ENCODE measurements at regions of chr12 and their contacts with region 1.

Region 1: DNA sequence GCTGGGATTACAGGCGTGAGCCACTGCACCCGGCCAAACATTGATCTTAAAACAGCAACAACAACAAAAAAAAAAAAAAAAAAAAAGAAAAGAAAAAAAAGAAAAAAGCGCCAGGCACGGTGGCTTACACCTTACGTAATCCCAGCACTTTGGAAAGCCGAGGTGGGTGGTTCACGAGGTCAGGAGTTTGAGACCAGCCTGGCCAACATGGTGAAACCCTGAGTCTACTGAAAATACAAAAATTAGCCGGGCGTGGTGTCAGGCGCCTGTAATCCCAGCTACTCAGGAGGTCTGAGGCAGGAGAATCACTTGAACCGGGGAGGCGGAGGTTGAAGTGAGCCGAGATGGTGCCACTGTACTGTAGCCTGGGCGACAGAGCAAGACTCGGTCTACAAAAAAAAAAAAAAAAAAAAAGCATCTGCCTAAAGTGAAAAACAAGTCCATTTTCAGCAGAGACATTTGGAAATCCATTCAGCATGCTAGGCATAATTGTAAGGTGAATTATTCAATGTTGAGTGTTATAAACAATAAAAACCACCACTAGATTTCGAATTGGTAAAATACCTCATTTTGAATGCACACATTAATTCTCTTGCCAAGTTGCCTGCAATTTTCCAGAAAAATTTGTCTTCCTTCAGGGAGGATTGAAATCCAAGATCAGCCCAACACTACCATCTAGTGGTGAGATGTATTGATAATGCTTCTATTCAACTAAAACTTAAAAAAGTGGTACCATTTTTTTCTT is 8.0 kb upstream of the CERS5 start:
- DNase-seq: peak; percentile 52 to 81
- ATAC-seq: peak in 1 of 2 experiments; percentile 72; a peak in 3 of 6 replicates
- H3K4me3 ChIP-seq: no peak overlapping the region
- H3K27ac ChIP-seq: no peak overlapping the region
- H3K4me1 ChIP-seq: 0 out of 3 replicates have a peak, but pooled peaks cover 4% of the 10 kb centered on the region
- CTCF ChIP-seq: peak; percentile 91
- EP300 ChIP-seq: no peak
- POLR2A ChIP-seq: no peak
- RAD21 ChIP-seq: peak; percentile 91 to 92

Region 2: GRCh38 chr12:49750027-49750995 is 424.8 kb before region 1 on chr12:
- CTCF ChIA-PET with region 1: no interaction called
- POLR2A ChIA-PET with region 1: no interaction called
- DNase-seq: peak in 1 of 2 experiments; percentile 49
- ATAC-seq: peak; percentile 71 to 91
- H3K4me3 ChIP-seq: no peak overlapping the region
- H3K27ac ChIP-seq: peak overlapping the region; percentile 63 to 78
- H3K4me1 ChIP-seq: peaks cover 21% of the 10 kb centered on the region
- CTCF ChIP-seq: no peak
- EP300 ChIP-seq: no peak
- POLR2A ChIP-seq: no peak
- RAD21 ChIP-seq: no peak

Region 3: GRCh38 chr12:50103767-50104321 is 71.3 kb before region 1 on chr12 and contains the start of gene GPD1:
- CTCF ChIA-PET with region 1: interaction called, 23 read pairs
- POLR2A ChIA-PET with region 1: interaction called, 3 read pairs
- DNase-seq: no peak
- ATAC-seq: peak; percentile 5 to 60; a peak in 3 of 6 replicates
- H3K4me3 ChIP-seq: no peak within 1 kb of the TSS
- H3K27ac ChIP-seq: no peak within 1 kb of the TSS
- H3K4me1 ChIP-seq: no peaks in the 10 kb centered on the region
- CTCF ChIP-seq: no peak
- EP300 ChIP-seq: no peak
- POLR2A ChIP-seq: no peak
- RAD21 ChIP-seq: no peak
- polyA plus RNA-seq, gene GPD1: 0.44 and 0.52 TPM in 2 replicates

Region 4: GRCh38 chr12:50187084-50187900 is 12.1 kb after region 1 on chr12:
- CTCF ChIA-PET with region 1: interaction called, 12 read pairs
- POLR2A ChIA-PET with region 1: no interaction called
- DNase-seq: no peak
- ATAC-seq: peak in 1 of 2 experiments; percentile 48; a peak in 4 of 6 replicates
- H3K4me3 ChIP-seq: no peak overlapping the region
- H3K27ac ChIP-seq: no peak overlapping the region
- H3K4me1 ChIP-seq: no peaks in the 10 kb centered on the region
- CTCF ChIP-seq: no peak
- EP300 ChIP-seq: no peak
- POLR2A ChIP-seq: no peak
- RAD21 ChIP-seq: no peak

Measured in A549 (cell line).